ENCODE measurements at regions of chr1 and their contacts with region 1.

Region 1: GRCh38 chr1:44652445-44653106 is 21.7 kb downstream of the TMEM53 start:
- DNase-seq: peak; percentile 73
- H3K4me3 Mint-ChIP-seq: no peak overlapping the region
- H3K27ac Mint-ChIP-seq: peak overlapping the region; percentile 16
- H3K4me1 Mint-ChIP-seq: no peaks in the 10 kb centered on the region
- H3K27me3 Mint-ChIP-seq: no peaks in the 10 kb centered on the region

Region 2: DNA sequence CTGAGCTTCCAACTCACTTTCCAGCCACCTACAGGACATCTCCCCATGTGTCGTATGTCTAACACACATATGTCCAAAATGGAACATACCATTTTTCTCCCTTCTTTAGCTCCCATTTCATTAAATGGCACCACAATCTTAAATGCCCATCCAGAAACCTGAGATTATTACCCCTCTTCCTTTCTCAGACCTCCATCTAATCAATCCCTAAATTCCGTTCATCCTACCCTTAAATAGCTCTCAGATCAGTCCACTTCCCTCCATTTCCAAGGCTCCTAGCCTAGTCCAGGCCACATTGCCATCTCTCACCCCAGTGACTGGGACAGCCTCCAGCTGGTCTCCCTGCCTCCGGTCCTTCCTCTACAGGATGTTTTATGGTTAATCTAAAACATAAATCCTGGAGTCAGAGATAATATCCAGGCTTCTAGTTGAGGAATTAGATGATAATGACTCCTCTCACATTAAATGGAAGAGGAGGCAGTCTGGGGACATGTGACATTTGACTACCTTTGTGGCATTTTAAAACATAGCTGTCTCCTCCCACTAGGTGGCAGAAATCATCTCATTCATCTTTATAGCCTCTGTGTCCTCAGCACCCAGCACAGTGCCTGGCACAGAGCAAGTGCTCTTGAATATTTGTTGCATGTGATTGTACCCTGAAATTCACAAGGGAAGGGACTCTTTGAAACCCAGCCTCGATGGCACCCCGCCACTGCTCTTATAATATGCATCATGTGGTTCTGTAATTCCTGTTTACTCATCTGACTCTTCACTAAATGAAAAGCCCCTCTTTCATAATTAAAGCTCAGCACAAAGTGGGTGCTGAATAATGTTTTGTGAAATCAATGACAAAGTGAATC is 80.6 kb before region 1 on chr1:
- CTCF ChIA-PET with region 1: interaction called, 13 read pairs
- POLR2A ChIA-PET with region 1: no interaction called
- DNase-seq: peak; percentile 42
- H3K4me3 Mint-ChIP-seq: no peak overlapping the region
- H3K27ac Mint-ChIP-seq: no peak overlapping the region
- H3K4me1 Mint-ChIP-seq: no peaks in the 10 kb centered on the region
- H3K27me3 Mint-ChIP-seq: peaks cover 17% of the 10 kb centered on the region

Region 3: GRCh38 chr1:44631647-44632539 is 20.7 kb before region 1 on chr1:
- CTCF ChIA-PET with region 1: interaction called, 72 read pairs
- POLR2A ChIA-PET with region 1: interaction called, 4 read pairs
- DNase-seq: peak; percentile 92
- H3K4me3 Mint-ChIP-seq: peak overlapping the region; percentile 89
- H3K27ac Mint-ChIP-seq: peak overlapping the region; percentile 99
- H3K4me1 Mint-ChIP-seq: peaks cover 37% of the 10 kb centered on the region
- H3K27me3 Mint-ChIP-seq: no peaks in the 10 kb centered on the region

Region 4: DNA sequence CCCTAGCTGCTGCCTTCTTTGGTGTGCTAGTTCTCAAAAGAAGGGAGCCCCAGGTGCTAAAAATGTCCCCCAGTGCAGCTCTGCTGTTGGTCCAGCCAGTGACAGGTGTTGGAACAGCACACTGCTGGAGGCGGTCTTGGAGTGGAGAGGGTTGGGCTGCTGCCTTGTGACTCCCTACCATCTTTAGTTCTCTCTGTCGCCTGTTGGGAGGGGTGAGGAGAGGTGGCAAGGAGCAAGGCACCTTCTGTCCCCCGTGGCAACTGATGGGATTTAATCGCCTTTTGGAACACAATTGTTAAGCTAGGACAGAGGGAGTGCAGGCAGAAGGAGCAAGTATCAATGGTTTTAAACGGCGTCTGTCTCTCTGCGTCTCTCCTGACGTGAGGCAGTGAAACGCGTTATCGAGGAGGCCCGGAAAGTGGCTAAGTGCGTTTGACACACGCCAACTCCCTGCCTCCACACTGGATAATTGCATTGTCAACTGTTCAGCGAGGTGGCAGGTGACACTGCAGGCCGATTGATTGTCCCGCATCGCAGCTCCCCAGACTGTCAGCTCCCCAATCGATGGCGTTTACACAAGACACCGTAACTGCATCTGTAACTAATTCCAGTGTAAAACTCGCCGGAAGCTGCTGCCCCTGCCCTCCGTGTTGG is 12.2 kb before region 1 on chr1:
- CTCF ChIA-PET with region 1: interaction called, 72 read pairs
- POLR2A ChIA-PET with region 1: interaction called, 3 read pairs
- DNase-seq: no peak
- H3K4me3 Mint-ChIP-seq: no peak overlapping the region
- H3K27ac Mint-ChIP-seq: no peak overlapping the region
- H3K4me1 Mint-ChIP-seq: no peaks in the 10 kb centered on the region
- H3K27me3 Mint-ChIP-seq: no peaks in the 10 kb centered on the region

Region 5: DNA sequence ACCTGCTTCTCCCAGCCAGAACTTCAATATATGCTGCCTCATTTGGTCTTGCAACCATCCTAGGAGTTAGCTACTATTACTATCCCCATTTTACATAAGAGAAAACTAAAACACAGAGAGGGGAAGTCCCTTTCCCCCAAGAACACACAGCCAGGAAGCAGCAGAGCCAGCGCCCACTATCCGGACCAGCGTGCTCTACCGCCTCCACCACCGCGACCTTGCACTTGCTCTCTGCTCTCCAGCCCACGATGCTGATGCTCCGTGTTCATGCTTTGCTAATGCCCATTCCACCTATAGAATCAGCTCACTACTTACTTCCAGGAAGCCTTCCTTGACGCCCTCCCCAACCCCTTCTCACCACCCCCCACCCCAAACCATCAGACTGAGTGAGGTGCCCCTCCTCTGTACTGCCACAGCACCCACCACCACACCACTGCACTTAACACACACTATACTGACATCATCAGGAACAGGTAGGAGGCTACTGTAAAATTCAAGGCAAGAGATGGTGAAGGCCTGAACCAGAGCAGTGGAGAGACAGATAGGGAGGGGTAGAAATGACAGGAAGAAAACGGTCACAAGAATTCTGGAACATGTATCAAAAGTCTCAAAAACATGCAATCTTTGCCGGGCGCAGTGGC is 12.3 kb after region 1 on chr1:
- CTCF ChIA-PET with region 1: interaction called, 22 read pairs
- POLR2A ChIA-PET with region 1: no interaction called
- DNase-seq: no peak
- H3K4me3 Mint-ChIP-seq: no peak overlapping the region
- H3K27ac Mint-ChIP-seq: peak overlapping the region; percentile 43
- H3K4me1 Mint-ChIP-seq: peaks cover 12% of the 10 kb centered on the region
- H3K27me3 Mint-ChIP-seq: no peaks in the 10 kb centered on the region

Region 6: GRCh38 chr1:44674113-44675000 is 21.8 kb after region 1 on chr1 and contains the starts of genes ARMH1 and TMEM53:
- CTCF ChIA-PET with region 1: interaction called, 17 read pairs
- POLR2A ChIA-PET with region 1: no interaction called
- DNase-seq: peak; percentile 99
- H3K4me3 Mint-ChIP-seq: peak within 1 kb of the TSS; percentile 83
- H3K27ac Mint-ChIP-seq: peak within 1 kb of the TSS; percentile 82
- H3K4me1 Mint-ChIP-seq: peaks cover 32% of the 10 kb centered on the region
- H3K27me3 Mint-ChIP-seq: no peaks in the 10 kb centered on the region
- total RNA-seq, gene ARMH1: 47.4 to 50.7 TPM
- total RNA-seq, gene TMEM53: 3.0 to 3.5 TPM

Region 7: DNA sequence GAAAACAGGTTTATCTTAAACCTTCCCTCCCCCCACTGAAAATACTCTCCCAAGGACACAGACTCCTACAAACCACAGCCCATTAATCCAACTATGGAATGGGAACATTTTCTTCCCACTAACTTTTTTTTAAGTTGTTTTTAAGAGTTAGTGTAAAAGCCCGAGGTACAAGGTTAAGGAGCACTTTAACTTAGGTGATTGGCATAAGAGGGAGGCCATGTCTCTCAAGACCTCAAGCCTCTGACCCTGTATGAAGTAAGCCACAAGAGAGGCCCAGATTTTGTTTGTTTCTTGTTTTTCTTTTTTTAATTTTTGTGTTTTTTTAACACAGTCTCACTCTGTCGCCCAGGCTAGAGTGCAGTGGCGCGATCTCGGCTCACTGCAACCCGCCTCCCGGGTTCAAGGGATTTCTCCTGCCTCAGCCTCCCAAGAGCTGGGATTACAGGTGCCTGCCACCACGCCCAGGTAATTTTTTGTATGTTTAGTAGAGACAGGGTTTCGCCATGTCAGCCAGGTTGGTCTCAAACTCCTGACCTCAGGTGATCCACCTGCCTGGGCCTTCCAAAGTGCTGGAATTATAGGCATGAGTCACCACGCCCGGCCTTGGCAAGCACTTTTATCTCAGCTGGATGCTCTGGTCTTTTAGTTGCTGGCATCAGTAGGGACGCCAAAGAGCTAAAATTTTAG is 36.3 kb after region 1 on chr1:
- CTCF ChIA-PET with region 1: no interaction called
- POLR2A ChIA-PET with region 1: no interaction called
- DNase-seq: no peak
- H3K4me3 Mint-ChIP-seq: no peak overlapping the region
- H3K27ac Mint-ChIP-seq: no peak overlapping the region
- H3K4me1 Mint-ChIP-seq: peaks cover 8% of the 10 kb centered on the region
- H3K27me3 Mint-ChIP-seq: peaks cover 2% of the 10 kb centered on the region

Region 8: DNA sequence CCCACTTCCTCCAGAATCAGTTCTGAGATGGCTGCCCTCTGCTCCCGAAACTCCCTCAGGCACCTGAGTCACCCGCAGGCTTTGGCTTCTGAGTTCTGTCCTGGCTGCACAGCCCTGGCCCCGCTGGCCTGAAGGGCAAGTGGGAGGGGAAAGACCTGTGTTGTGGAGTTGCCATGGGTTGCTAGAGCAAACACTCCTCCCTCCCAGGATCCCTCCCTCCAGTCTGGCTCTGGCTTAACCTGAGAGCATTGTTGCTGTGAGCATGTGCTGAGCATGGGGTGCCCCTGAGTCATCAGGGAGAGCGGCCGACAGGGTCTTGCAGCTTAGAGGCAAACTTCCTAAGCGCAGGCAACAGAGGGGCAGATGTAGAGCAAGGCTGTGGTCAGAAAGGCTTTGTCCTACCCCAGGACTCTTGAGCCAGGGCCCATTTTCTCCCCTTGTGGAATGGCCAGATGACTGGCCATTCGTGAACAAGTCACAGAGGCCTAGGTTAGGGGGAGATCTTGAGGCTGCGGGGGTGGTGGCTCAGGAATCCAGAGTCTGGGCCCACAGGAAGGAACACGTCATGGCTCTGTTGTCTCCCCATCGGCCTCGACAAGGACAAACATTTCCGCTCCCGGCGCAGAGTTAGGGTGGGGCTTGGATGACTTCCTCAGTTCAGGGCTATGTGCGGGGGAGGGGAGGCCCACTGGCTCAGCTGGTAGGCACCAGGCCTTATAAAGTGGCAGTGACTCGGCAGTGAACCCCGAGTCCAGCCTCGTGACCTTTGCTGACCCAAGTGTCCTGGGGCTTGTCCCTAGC is 154.9 kb after region 1 on chr1 and contains the start of gene DYNLT4:
- CTCF ChIA-PET with region 1: no interaction called
- POLR2A ChIA-PET with region 1: no interaction called
- DNase-seq: peak; percentile 95
- H3K4me3 Mint-ChIP-seq: peak within 1 kb of the TSS; percentile 71
- H3K27ac Mint-ChIP-seq: peak within 1 kb of the TSS; percentile 100
- H3K4me1 Mint-ChIP-seq: peaks cover 86% of the 10 kb centered on the region
- H3K27me3 Mint-ChIP-seq: no peaks in the 10 kb centered on the region
- total RNA-seq, gene DYNLT4: 0.47 to 0.83 TPM